Aorta (tissue), 5 donors: ENCODE measurements at regions of chrX and their contacts with region 1.

Region 1: GRCh38 chrX:101550362-101550750 is at the start of gene ARMCX1:
- DNase-seq: peak; percentile 88 to 89
- ATAC-seq: peak; percentile 89
- H3K4me3 ChIP-seq: peak within 1 kb of the TSS; percentile 45 to 54
- H3K27ac ChIP-seq: peak within 1 kb of the TSS; percentile 45 to 58
- H3K4me1 ChIP-seq: no peaks in the 10 kb centered on the region
- H3K27me3 ChIP-seq: no peaks in the 10 kb centered on the region
- total RNA-seq, gene ARMCX1: 31.5 to 32.9 TPM

Region 2: DNA sequence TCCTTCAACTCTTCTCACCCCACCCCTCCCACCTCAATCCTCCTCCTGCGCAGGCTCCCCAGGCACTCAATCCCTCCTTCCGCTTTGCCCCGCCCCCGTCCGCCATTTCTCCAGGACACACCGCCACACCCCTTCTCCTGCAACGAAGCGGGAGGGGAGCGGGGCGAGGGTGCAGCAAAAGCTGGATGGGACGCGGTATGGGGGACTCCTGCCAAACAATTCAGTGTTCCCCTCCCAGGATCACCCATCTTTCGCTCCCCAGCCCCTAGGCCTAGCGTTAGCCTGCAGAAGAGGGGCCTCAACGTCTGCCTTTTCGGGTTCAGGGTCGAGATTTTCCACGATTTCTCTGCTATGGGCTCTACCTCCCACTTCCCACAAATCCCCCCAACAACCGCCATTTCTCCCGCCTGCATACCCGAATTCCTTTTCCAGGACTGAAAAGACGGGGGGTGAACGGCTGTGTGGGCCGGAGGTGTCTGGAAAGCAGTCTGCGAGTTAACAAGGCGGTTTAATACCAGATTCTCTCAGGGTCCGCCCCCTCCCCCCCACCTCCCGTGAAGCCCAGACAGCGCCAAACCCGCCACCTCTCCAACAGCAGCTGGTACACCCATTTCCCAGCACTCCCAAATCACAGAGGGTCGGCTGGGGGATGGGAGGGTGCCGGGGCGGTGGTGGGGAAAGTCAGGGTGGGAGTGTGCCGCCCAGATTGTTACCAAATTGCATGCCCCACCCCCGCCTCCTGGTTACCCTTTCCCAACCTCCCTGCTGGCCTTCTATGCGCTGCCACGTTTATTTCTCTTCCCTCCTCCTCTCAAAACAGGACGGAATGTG is 108.5 kb after region 1 on chrX:
- intact Hi-C with region 1: loop called in 1 of 2 experiments (anchors 5 kb)
- DNase-seq: peak; percentile 83 to 89
- ATAC-seq: peak; percentile 80
- H3K4me3 ChIP-seq: peak overlapping the region; percentile 52 to 68
- H3K27ac ChIP-seq: peak overlapping the region in 1 of 2 donors; percentile 23
- H3K4me1 ChIP-seq: no peaks in the 10 kb centered on the region
- H3K27me3 ChIP-seq: no peaks in the 10 kb centered on the region